ENCODE measurements at regions of chr1 and their contacts with region 1.

Region 1: DNA sequence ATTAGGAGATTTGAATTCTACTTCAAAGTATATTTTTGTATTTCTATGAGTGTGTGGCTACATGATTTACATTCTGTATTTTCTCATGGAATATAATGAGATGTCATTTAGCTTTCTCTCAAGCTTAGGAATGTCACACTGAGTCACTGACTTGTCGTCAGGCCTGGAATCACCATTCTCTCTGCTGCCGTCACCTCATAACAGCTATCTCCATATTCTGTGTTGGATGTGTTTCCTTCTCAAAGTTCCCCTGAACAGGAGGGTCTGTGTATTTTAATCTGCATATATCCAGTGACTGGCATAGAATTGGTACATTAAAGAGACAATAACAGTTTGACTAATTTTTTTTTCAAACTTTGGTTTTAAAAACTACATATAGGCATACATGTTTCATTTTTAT is 35.9 kb downstream of the LYPLAL1 start:
- DNase-seq: no peak
- H3K4me3 ChIP-seq: no peak overlapping the region
- H3K27ac ChIP-seq: no peak overlapping the region
- H3K4me1 ChIP-seq: no peaks in the 10 kb centered on the region
- H3K27me3 ChIP-seq: no peaks in the 10 kb centered on the region
- CTCF ChIP-seq: no peak

Region 2: GRCh38 chr1:219385786-219386427 is 176.3 kb after region 1 on chr1:
- CTCF ChIA-PET with region 1: no interaction called
- POLR2A ChIA-PET with region 1: no interaction called
- intact Hi-C with region 1: loop called (anchors 2 kb)
- DNase-seq: peak; percentile 69
- H3K4me3 ChIP-seq: no peak overlapping the region
- H3K27ac ChIP-seq: no peak overlapping the region
- H3K4me1 ChIP-seq: no peaks in the 10 kb centered on the region
- H3K27me3 ChIP-seq: peaks cover 31% of the 10 kb centered on the region
- CTCF ChIP-seq: peak; percentile 84

Region 3: DNA sequence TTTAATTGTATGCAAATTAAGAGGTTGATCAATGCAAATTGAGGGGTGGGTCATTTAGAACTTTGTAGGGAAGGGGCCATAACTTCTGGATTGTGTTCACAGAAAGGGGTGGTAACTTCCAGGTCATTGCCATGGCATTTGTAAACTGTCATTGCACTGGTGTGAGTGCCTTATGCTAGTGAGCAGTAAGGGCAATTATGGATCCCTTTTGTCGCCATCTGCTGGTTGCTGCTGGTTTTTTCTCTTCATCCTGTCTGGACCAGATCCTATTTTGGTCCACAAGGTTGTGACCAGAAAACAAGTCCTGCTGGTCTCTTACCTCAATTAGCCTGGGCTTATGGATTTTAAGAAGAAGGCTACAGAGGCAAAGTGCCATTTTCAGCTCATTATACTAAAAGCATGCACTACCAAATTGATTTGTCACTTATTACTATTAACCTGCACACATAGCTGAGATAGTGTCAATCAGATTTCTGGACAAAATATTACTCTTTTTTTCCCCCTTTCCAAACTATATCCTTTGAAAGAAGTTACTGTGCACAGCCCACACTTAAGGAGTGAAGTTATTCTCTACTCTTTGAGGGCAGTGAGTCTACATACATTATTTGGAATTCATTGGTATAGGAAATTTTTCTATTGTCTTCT is 207.1 kb after region 1 on chr1:
- CTCF ChIA-PET with region 1: no interaction called
- POLR2A ChIA-PET with region 1: no interaction called
- intact Hi-C with region 1: loop called (anchors 1 kb)
- DNase-seq: peak; percentile 61
- H3K4me3 ChIP-seq: no peak overlapping the region
- H3K27ac ChIP-seq: no peak overlapping the region
- H3K4me1 ChIP-seq: no peaks in the 10 kb centered on the region
- H3K27me3 ChIP-seq: peaks cover 74% of the 10 kb centered on the region
- CTCF ChIP-seq: peak; percentile 77

Region 4: DNA sequence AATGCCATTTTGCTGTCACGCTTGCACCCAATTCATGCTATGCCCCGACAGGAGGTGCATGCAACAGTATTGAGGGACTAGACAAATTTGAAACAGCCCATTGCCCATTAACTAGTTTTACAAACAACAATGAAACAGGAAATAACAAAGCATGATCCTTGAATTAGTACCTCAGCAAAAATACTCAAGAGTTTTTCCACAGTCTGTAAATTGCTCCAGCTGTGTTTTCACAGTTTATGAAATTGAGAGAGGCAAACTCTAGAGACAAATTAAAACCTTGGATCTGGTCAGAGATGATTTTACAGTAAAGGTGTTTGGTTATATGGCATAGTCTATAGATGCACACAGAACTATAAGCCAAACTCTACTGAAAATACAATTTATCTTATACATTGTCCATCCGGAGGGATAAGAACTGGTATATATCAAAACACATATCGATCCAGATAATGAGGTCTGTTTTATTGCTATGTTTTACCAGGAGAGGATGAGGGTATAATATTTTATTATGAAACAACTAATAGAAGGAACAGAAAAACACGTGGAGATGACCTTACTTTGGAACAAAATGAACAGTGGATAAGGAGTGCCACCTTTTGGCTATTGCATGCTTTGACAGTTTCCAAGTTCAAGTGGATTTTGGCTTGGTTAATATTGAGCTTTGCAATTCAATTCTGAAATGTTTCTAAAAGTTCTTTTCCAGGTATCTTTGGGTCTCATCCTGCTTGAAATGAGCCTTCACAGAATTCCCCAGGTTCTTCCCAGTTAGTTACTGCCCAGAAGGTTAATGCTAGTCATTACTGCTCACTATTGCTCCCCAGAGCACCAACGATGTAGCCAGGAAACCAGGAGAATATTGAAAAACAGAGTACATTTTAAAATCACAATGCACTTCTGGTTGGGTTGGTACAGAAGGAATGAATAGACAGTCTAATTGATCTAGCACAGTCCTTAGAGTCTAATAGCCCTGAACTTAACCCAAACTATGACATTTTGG is 357.7 kb after region 1 on chr1:
- CTCF ChIA-PET with region 1: no interaction called
- POLR2A ChIA-PET with region 1: no interaction called
- intact Hi-C with region 1: loop called (anchors 10 kb)
- DNase-seq: peak; percentile 34
- H3K4me3 ChIP-seq: no peak overlapping the region
- H3K27ac ChIP-seq: no peak overlapping the region
- H3K4me1 ChIP-seq: no peaks in the 10 kb centered on the region
- H3K27me3 ChIP-seq: peaks cover 44% of the 10 kb centered on the region
- CTCF ChIP-seq: peak; percentile 49

Region 5: DNA sequence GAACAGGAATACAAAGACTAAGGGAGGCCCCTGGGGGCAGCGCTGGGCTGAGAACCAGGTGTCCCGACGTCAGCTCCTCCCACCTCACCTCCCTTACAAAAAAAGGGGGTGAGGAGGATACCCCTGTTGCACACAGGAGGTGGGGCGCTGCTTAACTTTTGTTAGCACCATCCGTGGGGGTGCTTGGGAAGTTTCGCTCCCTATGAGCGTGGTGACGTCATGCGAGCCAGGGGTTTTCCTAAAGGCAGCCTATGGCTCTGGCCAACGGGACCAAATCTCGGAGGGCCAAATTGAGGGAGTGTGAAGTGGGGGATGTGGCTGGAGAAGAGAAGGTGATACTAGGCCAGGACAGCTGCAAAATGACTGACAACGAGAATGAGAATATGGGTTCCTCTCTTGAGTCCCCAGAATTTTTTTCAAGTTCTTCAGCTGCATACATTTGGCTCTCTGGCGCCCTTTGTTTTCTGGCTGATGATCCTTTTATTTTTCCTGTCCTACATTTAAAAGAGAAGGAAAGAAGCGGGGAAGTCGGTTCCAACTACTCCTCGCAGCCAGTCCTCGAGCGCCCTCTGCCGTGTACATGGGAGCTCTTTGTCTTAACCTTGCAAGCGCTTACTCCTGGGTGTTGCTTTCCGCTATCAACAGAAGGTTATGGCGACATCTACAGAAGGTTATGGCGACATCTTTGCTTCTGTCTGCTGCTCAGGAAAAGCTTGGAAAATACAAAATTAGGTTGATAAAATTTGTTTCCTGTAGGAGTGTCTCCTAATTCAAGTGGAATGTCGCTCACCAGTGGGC is 451.3 kb after region 1 on chr1:
- CTCF ChIA-PET with region 1: no interaction called
- POLR2A ChIA-PET with region 1: no interaction called
- intact Hi-C with region 1: loop called (anchors 2 kb)
- DNase-seq: peak; percentile 91
- H3K4me3 ChIP-seq: no peak overlapping the region
- H3K27ac ChIP-seq: no peak overlapping the region
- H3K4me1 ChIP-seq: peaks cover 9% of the 10 kb centered on the region
- H3K27me3 ChIP-seq: peaks cover 35% of the 10 kb centered on the region
- CTCF ChIP-seq: peak; percentile 89

Region 6: GRCh38 chr1:219812491-219813203 is 603.1 kb after region 1 on chr1:
- CTCF ChIA-PET with region 1: no interaction called
- POLR2A ChIA-PET with region 1: no interaction called
- intact Hi-C with region 1: loop called (anchors 2 kb)
- DNase-seq: peak; percentile 69
- H3K4me3 ChIP-seq: no peak overlapping the region
- H3K27ac ChIP-seq: no peak overlapping the region
- H3K4me1 ChIP-seq: no peaks in the 10 kb centered on the region
- H3K27me3 ChIP-seq: peaks cover 99% of the 10 kb centered on the region
- CTCF ChIP-seq: peak; percentile 73